GM12878 (cell line): ENCODE measurements at regions of chr1 and their contacts with region 1.

Region 1: GRCh38 chr1:89719502-89720306 is 86.8 kb downstream of the LRRC8C start:
- DNase-seq: peak; percentile 80
- ATAC-seq: peak; percentile 92
- H3K4me3 ChIP-seq: 0 out of 2 replicates have a peak overlapping the region, but pooled peaks have one; percentile 19
- H3K27ac ChIP-seq: 0 out of 2 replicates have a peak overlapping the region, but pooled peaks have one; percentile 4
- H3K4me1 ChIP-seq: peaks cover 28% of the 10 kb centered on the region
- H3K27me3 ChIP-seq: no peaks in the 10 kb centered on the region
- CTCF ChIP-seq: no peak
- EP300 ChIP-seq: peak; percentile 64 to 88; a peak in 2 of 4 replicates
- POLR2A ChIP-seq: no peak
- RAD21 ChIP-seq: peak; percentile 9; the same call in 1 of the 2 replicates

Region 2: GRCh38 chr1:89657886-89658285 is 61.8 kb before region 1 on chr1:
- CTCF ChIA-PET with region 1: interaction called, 12 read pairs
- POLR2A ChIA-PET with region 1: interaction called, 3 read pairs
- RAD21 ChIA-PET with region 1: interaction called, 14 read pairs
- SMC1A ChIA-PET with region 1: interaction called, 6 read pairs
- in situ Hi-C with region 1: no loop called
- intact Hi-C with region 1: no loop called
- DNase-seq: peak; percentile 76
- ATAC-seq: peak; percentile 84
- H3K4me3 ChIP-seq: no peak overlapping the region
- H3K27ac ChIP-seq: peak overlapping the region; percentile 35
- H3K4me1 ChIP-seq: peaks cover 23% of the 10 kb centered on the region
- H3K27me3 ChIP-seq: no peaks in the 10 kb centered on the region
- CTCF ChIP-seq: no peak
- EP300 ChIP-seq: peak in 1 of 2 experiments; percentile 57; a peak in 1 of 4 replicates
- POLR2A ChIP-seq: no peak
- RAD21 ChIP-seq: no peak

Region 3: GRCh38 chr1:89692601-89693521 is 26.8 kb before region 1 on chr1:
- CTCF ChIA-PET with region 1: interaction called, 10 read pairs
- POLR2A ChIA-PET with region 1: interaction called, 20 read pairs
- RAD21 ChIA-PET with region 1: interaction called, 42 read pairs
- SMC1A ChIA-PET with region 1: interaction called, 70 read pairs
- in situ Hi-C with region 1: no loop called
- intact Hi-C with region 1: no loop called
- DNase-seq: peak; percentile 52
- ATAC-seq: peak; percentile 83
- H3K4me3 ChIP-seq: peak overlapping the region; percentile 55; the same call in 1 of the 2 replicates
- H3K27ac ChIP-seq: peak overlapping the region; percentile 86
- H3K4me1 ChIP-seq: peaks cover 24% of the 10 kb centered on the region
- H3K27me3 ChIP-seq: no peaks in the 10 kb centered on the region
- CTCF ChIP-seq: no peak
- EP300 ChIP-seq: peak; percentile 89 to 91
- POLR2A ChIP-seq: no peak
- RAD21 ChIP-seq: no peak

Region 4: GRCh38 chr1:89706700-89707012 is 13.0 kb before region 1 on chr1:
- CTCF ChIA-PET with region 1: interaction called, 8 read pairs
- POLR2A ChIA-PET with region 1: interaction called, 6 read pairs
- RAD21 ChIA-PET with region 1: interaction called, 11 read pairs
- SMC1A ChIA-PET with region 1: interaction called, 19 read pairs
- in situ Hi-C with region 1: no loop called
- intact Hi-C with region 1: no loop called
- DNase-seq: no peak
- ATAC-seq: peak; percentile 51
- H3K4me3 ChIP-seq: peak overlapping the region; percentile 1; the same call in 1 of the 2 replicates
- H3K27ac ChIP-seq: peak overlapping the region; percentile 37
- H3K4me1 ChIP-seq: peaks cover 21% of the 10 kb centered on the region
- H3K27me3 ChIP-seq: no peaks in the 10 kb centered on the region
- CTCF ChIP-seq: no peak
- EP300 ChIP-seq: no peak
- POLR2A ChIP-seq: no peak
- RAD21 ChIP-seq: no peak

Region 5: DNA sequence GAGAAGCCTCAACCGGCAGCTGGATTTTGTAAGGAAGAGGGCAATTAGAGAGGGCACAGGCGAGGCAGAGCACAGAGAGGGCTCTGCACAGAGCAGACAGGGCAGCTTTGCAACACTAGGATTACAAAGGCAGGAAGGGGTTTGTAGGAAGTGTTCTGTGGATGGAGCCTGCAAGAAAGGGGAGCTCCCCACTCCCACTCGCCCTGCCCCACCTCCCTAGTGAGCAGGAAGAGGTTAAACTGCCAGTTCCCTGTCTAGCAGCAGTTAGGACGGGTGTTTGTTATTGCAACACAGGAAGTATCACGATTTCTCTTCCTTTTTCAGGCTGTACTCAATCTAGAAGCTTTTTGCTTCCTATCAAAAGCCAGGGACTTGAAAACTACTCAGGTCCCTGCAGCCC is 37.8 kb after region 1 on chr1:
- CTCF ChIA-PET with region 1: interaction called, 37 read pairs
- POLR2A ChIA-PET with region 1: interaction called, 7 read pairs
- RAD21 ChIA-PET with region 1: interaction called, 22 read pairs
- SMC1A ChIA-PET with region 1: interaction called, 26 read pairs
- in situ Hi-C with region 1: no loop called
- intact Hi-C with region 1: loop called (anchors 2 kb)
- DNase-seq: no peak
- ATAC-seq: peak; percentile 53
- H3K4me3 ChIP-seq: no peak overlapping the region
- H3K27ac ChIP-seq: no peak overlapping the region
- H3K4me1 ChIP-seq: peaks cover 6% of the 10 kb centered on the region; the same call in 1 of the 2 replicates
- H3K27me3 ChIP-seq: no peaks in the 10 kb centered on the region
- CTCF ChIP-seq: no peak
- EP300 ChIP-seq: no peak
- POLR2A ChIP-seq: no peak
- RAD21 ChIP-seq: no peak

Region 6: DNA sequence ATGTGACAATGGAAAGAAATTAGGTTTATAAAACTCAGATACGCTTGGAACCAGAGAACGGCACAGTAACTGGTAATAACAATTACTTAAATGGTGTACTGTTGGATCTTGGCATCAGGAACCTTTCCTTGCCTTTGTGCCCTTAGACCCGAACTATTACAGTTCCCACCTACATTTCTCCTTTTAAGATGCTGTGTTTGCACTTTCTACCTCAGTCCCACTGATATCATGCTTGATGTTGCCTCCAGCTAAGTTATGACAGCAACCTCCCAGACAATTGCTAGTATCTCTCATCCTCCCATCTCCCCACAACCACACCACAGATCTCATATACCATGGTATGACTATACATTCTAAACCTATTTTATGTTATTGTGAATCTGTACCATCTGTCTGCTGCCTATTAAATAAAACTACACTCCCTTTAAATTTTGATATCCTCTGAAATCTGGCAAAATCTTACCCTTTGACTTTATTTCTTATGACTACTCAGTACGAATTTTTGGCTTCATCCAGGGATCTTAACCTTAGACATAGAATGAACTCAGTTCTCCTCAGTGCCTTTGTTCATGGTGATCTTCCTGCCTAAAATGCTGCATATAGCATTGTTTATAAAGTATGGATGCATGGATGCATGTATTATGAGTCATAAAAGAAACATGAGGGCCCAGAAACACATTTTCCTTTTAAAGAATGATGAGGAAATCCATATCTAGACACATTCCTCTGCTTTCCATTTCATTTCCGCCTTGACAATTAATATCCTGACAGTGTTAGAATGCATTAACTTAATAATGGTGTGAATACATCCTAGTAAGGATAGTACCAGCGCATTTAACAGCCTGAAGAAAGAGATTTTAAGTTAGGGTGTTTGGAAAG is 165.3 kb after region 1 on chr1:
- CTCF ChIA-PET with region 1: no interaction called
- POLR2A ChIA-PET with region 1: no interaction called
- RAD21 ChIA-PET with region 1: no interaction called
- SMC1A ChIA-PET with region 1: no interaction called
- in situ Hi-C with region 1: no loop called
- intact Hi-C with region 1: no loop called
- DNase-seq: no peak
- ATAC-seq: no peak
- H3K4me3 ChIP-seq: no peak overlapping the region
- H3K27ac ChIP-seq: no peak overlapping the region
- H3K4me1 ChIP-seq: no peaks in the 10 kb centered on the region
- H3K27me3 ChIP-seq: no peaks in the 10 kb centered on the region
- CTCF ChIP-seq: no peak
- EP300 ChIP-seq: no peak
- POLR2A ChIP-seq: no peak
- RAD21 ChIP-seq: no peak